Caco-2 (cell line): ENCODE measurements at regions of chr2 and their contacts with region 1.

Region 1: GRCh38 chr2:78676921-78677696 is 348.4 kb upstream of the REG3G start:
- DNase-seq: no peak
- H3K4me3 ChIP-seq: no peak overlapping the region
- H3K4me3 Mint-ChIP-seq: no peak overlapping the region
- H3K27ac Mint-ChIP-seq: no peak overlapping the region
- H3K4me1 ChIP-seq: no peaks in the 10 kb centered on the region
- H3K4me1 Mint-ChIP-seq: peaks cover 6% of the 10 kb centered on the region
- H3K27me3 ChIP-seq: no peaks in the 10 kb centered on the region
- H3K27me3 Mint-ChIP-seq: peaks cover 7% of the 10 kb centered on the region
- CTCF ChIP-seq: no peak

Region 2: GRCh38 chr2:78861546-78861945 is 184.4 kb after region 1 on chr2:
- CTCF ChIA-PET with region 1: interaction called, 7 read pairs
- POLR2A ChIA-PET with region 1: no interaction called
- intact Hi-C with region 1: loop called (anchors 1 kb)
- DNase-seq: peak in 1 of 2 experiments; percentile 35
- H3K4me3 ChIP-seq: no peak overlapping the region
- H3K4me3 Mint-ChIP-seq: no peak overlapping the region
- H3K27ac Mint-ChIP-seq: no peak overlapping the region
- H3K4me1 ChIP-seq: no peaks in the 10 kb centered on the region
- H3K4me1 Mint-ChIP-seq: peaks cover 3% of the 10 kb centered on the region
- H3K27me3 ChIP-seq: no peaks in the 10 kb centered on the region
- H3K27me3 Mint-ChIP-seq: peaks cover 13% of the 10 kb centered on the region
- CTCF ChIP-seq: peak; percentile 47 to 56

Region 3: GRCh38 chr2:78999406-78999805 is 322.3 kb after region 1 on chr2:
- CTCF ChIA-PET with region 1: interaction called, 4 read pairs
- POLR2A ChIA-PET with region 1: no interaction called
- intact Hi-C with region 1: loop called (anchors 1 kb)
- DNase-seq: no peak
- H3K4me3 ChIP-seq: no peak overlapping the region
- H3K4me3 Mint-ChIP-seq: no peak overlapping the region
- H3K27ac Mint-ChIP-seq: no peak overlapping the region
- H3K4me1 ChIP-seq: no peaks in the 10 kb centered on the region
- H3K4me1 Mint-ChIP-seq: no peaks in the 10 kb centered on the region
- H3K27me3 ChIP-seq: peaks cover 1% of the 10 kb centered on the region
- H3K27me3 Mint-ChIP-seq: peaks cover 12% of the 10 kb centered on the region
- CTCF ChIP-seq: peak; percentile 31 to 38